ENCODE measurements at regions of chr3 and their contacts with region 1.

Region 1: GRCh38 chr3:47469616-47470015 is 6.1 kb downstream of the SCAP start:
- DNase-seq: no peak
- H3K4me3 ChIP-seq: no peak overlapping the region
- H3K27ac ChIP-seq: no peak overlapping the region
- H3K4me1 ChIP-seq: peaks cover 6% of the 10 kb centered on the region
- H3K27me3 ChIP-seq: no peaks in the 10 kb centered on the region
- CTCF ChIP-seq: no peak
- EP300 ChIP-seq: no peak
- POLR2A ChIP-seq: no peak

Region 2: DNA sequence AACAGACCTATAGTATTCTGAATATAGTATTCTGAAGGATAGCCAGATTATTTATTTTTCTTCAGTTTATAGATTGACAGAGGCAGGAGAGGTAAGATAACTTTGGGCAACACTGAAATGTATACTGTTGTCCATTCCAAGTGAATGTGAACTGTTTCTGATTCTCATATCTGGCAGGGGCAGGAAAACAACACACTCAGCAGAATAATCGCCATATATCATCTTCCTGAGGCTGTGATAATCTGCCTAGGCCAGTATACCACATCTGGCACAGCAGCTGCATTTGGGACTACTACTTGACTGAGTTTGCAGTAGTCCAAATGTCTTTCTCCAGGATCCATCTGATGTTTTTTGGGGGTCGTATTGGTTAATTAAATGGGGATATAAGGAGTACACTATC is 283.3 kb before region 1 on chr3:
- intact Hi-C with region 1: no loop called
- DNase-seq: no peak
- H3K4me3 ChIP-seq: no peak overlapping the region
- H3K27ac ChIP-seq: no peak overlapping the region
- H3K4me1 ChIP-seq: no peaks in the 10 kb centered on the region
- H3K27me3 ChIP-seq: no peaks in the 10 kb centered on the region
- CTCF ChIP-seq: no peak
- EP300 ChIP-seq: no peak
- POLR2A ChIP-seq: no peak

Region 3: GRCh38 chr3:47434849-47435248 is 34.8 kb before region 1 on chr3:
- intact Hi-C with region 1: loop called in 1 of 4 experiments (anchors 5 kb)
- DNase-seq: peak in 1 of 5 donors; percentile 3
- H3K4me3 ChIP-seq: no peak overlapping the region
- H3K27ac ChIP-seq: no peak overlapping the region
- H3K4me1 ChIP-seq: no peaks in the 10 kb centered on the region
- H3K27me3 ChIP-seq: no peaks in the 10 kb centered on the region
- CTCF ChIP-seq: no peak
- EP300 ChIP-seq: no peak
- POLR2A ChIP-seq: no peak

Region 4: DNA sequence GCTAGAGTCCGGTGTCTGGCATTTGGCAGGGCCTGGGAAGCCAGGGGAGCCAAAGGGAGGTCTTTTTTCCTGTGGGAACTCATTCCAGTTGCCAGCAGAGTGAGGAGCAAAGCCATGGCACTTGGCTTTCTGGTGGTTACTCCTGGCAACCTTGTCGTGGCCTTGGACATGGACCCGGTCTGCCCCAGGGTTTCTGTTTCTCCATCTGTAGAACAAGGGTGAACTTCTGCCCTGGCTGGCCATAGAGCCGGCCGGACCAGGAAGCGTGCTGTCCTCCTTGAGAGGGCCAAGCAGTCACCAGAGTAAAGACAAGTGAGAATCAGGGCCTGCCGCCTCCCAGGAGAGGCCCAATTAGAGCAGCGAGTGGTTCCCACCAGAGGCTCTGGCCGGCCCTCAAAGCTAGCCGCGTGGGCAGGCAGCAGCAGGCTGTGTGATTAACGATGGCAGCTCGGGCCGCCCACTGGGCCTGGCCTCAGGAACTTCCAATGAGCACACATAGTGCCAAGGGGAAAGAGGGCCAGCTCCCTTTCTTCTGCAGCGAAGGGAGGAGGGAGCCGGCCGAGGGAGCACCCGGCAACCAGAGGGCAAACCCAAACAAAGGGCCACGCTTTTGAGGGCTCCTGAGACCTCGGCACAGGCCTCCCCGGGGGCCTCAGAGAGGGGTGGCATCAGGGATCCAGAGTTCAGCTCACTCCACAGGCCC is 73.0 kb after region 1 on chr3:
- intact Hi-C with region 1: no loop called
- DNase-seq: peak; percentile 23 to 73 (median 53)
- H3K4me3 ChIP-seq: no peak overlapping the region
- H3K27ac ChIP-seq: peak overlapping the region in 1 of 2 donors; percentile 15
- H3K4me1 ChIP-seq: peaks cover 10% of the 10 kb centered on the region
- H3K27me3 ChIP-seq: no peaks in the 10 kb centered on the region
- CTCF ChIP-seq: no peak
- EP300 ChIP-seq: no peak
- POLR2A ChIP-seq: no peak

Measured in ovary (tissue), 10 donors.